Posterior vena cava (tissue), 2 donors: ENCODE measurements at regions of chr6 and their contacts with region 1.

Region 1: DNA sequence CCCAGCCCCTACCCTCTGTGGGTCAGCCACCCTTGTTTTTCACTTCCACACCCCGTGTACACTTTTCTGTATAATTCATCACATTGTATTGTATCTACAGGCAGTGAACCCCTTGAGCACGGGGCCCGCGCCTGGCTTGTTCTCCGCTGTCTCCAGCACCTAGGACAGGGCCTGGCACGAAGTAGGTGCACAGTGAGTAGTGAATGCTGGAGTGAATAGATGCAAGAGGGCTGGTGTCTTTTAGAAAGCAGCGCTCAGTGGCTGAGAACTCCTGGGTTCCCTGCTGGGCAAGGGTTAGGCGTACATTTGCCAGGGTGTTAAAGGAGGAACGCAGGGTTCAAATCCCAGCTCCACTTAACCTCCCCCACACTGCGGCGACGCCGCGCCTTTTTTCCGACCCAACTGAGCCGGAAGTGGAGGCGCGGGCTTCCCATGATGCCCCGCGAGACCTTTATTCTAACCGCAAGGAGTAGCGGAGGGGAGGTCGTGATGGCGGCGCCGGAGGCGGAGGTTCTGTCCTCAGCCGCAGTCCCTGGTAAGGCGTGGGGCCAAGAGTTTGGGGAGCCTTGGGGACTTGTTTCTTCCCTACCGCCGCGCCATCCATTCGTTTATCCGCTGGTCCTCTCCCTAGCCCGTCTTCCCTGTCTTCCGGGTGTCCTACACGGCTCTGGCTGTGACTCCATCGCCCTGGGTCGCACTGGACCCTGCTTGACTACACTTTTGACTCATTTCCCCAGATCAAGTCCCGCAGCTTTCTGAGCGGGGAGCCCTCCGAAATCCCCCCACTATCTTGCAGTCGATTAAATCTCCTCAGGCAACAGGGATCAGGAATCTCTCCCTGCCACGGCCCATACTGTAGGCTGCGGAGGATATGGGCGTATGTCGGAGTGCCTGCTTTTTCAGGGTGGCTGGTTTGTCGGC is at the start of gene MAD2L1BP:
- DNase-seq: peak; percentile 95
- total RNA-seq, gene MAD2L1BP: 12.0 to 15.5 TPM

Region 2: DNA sequence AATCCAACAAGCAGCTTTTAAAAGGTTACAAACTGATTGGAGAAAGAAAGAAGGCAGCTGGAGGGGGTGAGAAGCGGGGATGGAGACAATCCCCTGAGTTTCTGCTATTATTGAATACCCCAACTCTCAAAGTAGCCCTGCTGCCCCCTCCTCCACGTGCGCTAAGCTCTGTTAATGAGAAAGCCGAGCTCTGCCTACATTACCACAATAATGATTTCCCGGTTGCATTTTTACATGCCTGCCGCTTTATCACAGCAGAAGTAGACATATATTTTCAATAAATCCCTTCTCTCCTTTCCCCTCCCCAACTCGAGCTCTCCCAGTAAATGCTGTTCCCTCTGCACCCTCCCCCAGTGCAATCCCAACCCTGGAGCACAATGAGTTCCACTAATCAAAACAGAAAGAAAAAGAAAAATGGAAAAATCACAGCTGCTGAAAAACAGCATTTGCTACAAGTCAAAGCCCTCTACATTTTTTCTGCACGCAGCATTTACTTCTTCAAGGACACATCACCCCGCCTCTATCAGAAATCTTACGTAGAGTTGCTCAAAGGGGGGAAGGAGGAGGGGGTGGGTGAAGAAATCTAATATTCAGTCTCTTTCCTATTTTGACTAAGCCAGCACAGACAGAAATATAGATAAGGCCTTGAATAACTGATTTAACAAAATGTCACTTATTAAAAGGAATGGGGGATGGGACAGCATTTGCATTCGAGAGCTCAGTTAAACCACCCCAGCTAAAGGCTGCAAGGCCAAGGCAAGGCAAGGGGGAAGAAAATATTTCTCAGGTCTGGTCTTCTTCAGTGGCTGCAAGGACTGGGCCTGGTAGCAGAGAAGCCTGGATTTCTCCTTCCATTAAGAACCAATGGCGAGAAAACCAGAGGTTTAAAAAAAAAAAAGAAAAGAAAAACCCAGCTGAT is 1194.6 kb before region 1 on chr6:
- intact Hi-C with region 1: loop called in 1 of 2 experiments (anchors 5 kb)
- DNase-seq: no peak